ENCODE measurements at regions of chr1 and their contacts with region 1.

Region 1: GRCh38 chr1:15816674-15817073 is 9.2 kb upstream of the UQCRHL start:
- DNase-seq: no peak
- ATAC-seq: no peak
- H3K4me3 ChIP-seq: no peak overlapping the region
- H3K27ac ChIP-seq: no peak overlapping the region
- H3K4me1 ChIP-seq: peaks cover 0 to 2% of the 10 kb centered on the region in 2 donors
- H3K27me3 ChIP-seq: no peaks in the 10 kb centered on the region
- CTCF ChIP-seq: no peak
- POLR2A ChIP-seq: no peak

Region 2: DNA sequence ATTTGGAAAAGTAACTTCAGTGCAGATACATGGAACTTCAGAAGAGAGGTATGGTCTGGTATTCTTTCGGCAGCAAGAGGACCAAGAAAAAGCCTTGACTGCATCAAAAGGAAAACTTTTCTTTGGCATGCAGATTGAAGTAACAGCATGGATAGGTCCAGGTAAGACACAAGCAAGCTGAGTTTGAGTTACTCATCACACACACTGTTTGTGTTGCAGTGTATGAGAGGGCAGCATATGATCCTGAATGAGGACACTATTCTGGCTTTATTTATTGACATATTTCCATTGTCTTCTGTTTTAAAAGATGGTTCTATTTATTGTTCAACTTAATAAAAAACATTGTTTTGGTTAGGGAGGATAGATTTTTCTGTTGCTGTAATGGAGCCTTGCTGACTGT is 94.5 kb after region 1 on chr1:
- in situ Hi-C with region 1: no loop called
- intact Hi-C with region 1: loop called (anchors 5 kb)
- DNase-seq: no peak
- ATAC-seq: no peak
- H3K4me3 ChIP-seq: no peak overlapping the region
- H3K27ac ChIP-seq: no peak overlapping the region
- H3K4me1 ChIP-seq: peaks cover 3 to 7% of the 10 kb centered on the region in 2 donors
- H3K27me3 ChIP-seq: no peaks in the 10 kb centered on the region
- CTCF ChIP-seq: no peak
- POLR2A ChIP-seq: no peak

Region 3: GRCh38 chr1:15975805-15976680 is 159.4 kb after region 1 on chr1 and contains the start of gene ZBTB17:
- in situ Hi-C with region 1: loop called in 3 of 4 experiments (anchors 10 to 25 kb)
- intact Hi-C with region 1: loop called (anchors 5 kb)
- DNase-seq: peak; percentile 85 to 90
- ATAC-seq: peak; percentile 98 to 100
- H3K4me3 ChIP-seq: peak within 1 kb of the TSS; percentile 84 to 96 (median 88)
- H3K27ac ChIP-seq: peak within 1 kb of the TSS; percentile 84 to 96 (median 88)
- H3K4me1 ChIP-seq: peaks cover 8 to 17% of the 10 kb centered on the region in 2 donors
- H3K27me3 ChIP-seq: no peaks in the 10 kb centered on the region
- CTCF ChIP-seq: no peak
- POLR2A ChIP-seq: peak; percentile 70 to 80
- total RNA-seq, gene ZBTB17: 25.9 to 44.1 (median 31.5) TPM

Region 4: DNA sequence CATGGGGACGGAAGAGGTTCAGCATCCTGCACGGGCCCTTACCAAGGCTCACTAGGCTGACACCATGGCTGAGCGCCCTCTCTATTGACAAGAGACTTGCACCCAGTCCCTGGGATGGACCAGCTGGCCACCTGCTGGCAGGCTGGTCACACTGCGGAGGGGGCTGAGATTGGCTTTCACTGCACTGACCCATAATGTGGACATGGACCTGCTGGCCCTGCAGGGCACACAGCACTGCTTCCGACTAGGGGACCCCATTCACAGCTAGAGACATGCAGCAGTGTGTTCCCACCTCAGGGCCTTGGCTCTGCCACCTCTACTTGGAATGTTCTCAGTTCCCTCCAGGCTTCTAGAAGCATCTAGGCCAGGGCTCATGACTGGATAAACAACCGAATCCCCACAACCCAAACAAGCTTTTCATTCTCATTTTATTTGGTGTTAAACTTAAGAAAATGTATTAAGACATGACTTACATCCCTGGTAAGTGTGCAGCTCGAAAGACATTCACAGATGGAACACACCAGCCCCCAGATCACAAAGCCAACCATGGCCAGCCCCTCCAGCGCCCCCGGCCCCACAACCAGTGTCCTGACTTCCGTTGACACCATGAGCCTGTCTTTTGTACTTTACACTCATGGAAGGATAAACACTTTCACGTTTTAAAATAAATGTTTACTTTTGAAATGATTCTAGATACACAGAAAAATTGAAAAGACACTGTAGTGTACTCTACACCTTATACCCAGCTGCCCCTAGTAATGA is 178.1 kb after region 1 on chr1:
- in situ Hi-C with region 1: loop called in 3 of 4 experiments (anchors 10 to 25 kb)
- intact Hi-C with region 1: loop called (anchors 5 kb)
- DNase-seq: peak in 1 of 2 donors; percentile 37
- ATAC-seq: peak; percentile 42 to 54
- H3K4me3 ChIP-seq: no peak overlapping the region
- H3K27ac ChIP-seq: no peak overlapping the region
- H3K4me1 ChIP-seq: no peaks in the 10 kb centered on the region
- H3K27me3 ChIP-seq: no peaks in the 10 kb centered on the region
- CTCF ChIP-seq: peak; percentile 58 to 93 (median 80)
- POLR2A ChIP-seq: no peak

Region 5: GRCh38 chr1:16048573-16049189 is 232.0 kb after region 1 on chr1:
- in situ Hi-C with region 1: loop called in 1 of 4 experiments (anchors 25 kb)
- intact Hi-C with region 1: loop called (anchors 5 kb)
- DNase-seq: no peak
- ATAC-seq: peak; percentile 17 to 22
- H3K4me3 ChIP-seq: peak overlapping the region; percentile 18 to 45 (median 35)
- H3K27ac ChIP-seq: no peak overlapping the region
- H3K4me1 ChIP-seq: peaks cover 0 to 4% of the 10 kb centered on the region in 2 donors
- H3K27me3 ChIP-seq: no peaks in the 10 kb centered on the region
- CTCF ChIP-seq: no peak
- POLR2A ChIP-seq: no peak